MCF 10A (cell line): ENCODE measurements at regions of chr6 and their contacts with region 1.

Region 1: DNA sequence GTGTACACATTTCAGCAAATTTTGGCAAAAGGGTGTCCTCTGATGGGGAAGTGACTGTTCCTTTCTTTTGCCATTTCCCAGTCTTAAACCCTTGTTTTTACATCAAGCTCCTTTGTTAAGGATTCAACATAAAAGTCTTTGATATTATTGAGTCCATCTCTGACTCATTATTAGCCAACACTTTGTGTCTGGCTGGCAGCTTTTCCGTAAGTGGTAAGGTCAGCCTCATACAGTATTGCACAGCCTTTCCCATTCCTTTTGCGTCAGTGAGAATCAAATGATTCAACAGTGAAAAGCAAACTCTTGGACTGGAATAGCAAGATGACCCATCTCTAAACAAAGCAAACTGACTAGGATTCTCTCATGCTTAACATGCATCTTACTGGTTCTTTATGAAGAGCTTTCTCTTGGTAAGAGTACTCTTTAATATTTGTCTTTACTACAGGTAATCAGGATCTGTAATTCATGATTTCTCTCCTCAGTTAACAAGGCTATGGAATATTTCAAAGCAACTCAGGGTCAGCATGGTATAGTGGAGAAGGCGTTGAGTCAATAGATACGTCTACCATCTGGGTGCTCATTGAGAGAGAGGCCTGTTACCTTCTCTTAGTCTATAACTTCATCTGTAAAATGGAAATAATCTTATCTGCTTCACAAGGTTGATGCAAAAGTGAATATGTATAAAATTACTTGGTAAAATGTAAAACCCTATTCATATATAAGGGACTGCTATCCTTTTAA is 183.6 kb downstream of the PRL start:
- DNase-seq: peak; percentile 97
- H3K4me3 Mint-ChIP-seq: peak overlapping the region; percentile 33
- H3K27ac Mint-ChIP-seq: peak overlapping the region; percentile 69
- H3K4me1 Mint-ChIP-seq: peaks cover 16% of the 10 kb centered on the region
- H3K27me3 Mint-ChIP-seq: no peaks in the 10 kb centered on the region
- CTCF ChIP-seq: no peak

Region 2: DNA sequence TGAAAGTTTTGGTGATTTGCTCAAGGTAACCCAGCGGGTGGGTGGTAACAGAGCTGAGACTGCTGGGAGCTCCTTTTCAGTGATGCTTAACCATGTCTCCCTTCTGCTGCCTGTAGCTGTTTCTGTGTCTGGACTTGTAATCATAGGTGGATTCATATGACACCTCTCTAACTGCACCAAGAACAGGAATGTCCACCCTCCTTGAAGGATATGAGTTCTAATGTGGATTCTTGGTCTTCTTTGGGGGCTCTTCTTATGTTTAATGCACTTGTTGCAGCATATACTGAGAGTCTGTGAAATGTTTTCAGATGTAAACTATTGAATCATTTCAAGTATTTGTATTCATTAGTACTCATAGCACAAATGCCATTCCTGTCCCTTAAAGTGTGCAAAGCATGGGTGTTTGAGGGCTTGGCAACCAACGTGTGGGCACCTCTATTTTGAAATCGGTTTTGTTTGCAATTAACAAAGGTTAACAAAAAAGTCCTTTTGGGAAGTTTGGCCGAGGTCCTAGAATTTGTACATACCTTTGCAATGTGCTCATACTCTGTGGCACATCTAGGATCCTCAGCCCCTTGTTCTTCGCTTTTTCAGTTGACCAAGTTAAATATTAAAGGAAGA is 381.7 kb before region 1 on chr6:
- CTCF ChIA-PET with region 1: no interaction called
- POLR2A ChIA-PET with region 1: no interaction called
- intact Hi-C with region 1: no loop called
- DNase-seq: peak; percentile 92
- H3K4me3 Mint-ChIP-seq: peak overlapping the region; percentile 45
- H3K27ac Mint-ChIP-seq: peak overlapping the region; percentile 80
- H3K4me1 Mint-ChIP-seq: peaks cover 14% of the 10 kb centered on the region
- H3K27me3 Mint-ChIP-seq: no peaks in the 10 kb centered on the region
- CTCF ChIP-seq: no peak

Region 3: DNA sequence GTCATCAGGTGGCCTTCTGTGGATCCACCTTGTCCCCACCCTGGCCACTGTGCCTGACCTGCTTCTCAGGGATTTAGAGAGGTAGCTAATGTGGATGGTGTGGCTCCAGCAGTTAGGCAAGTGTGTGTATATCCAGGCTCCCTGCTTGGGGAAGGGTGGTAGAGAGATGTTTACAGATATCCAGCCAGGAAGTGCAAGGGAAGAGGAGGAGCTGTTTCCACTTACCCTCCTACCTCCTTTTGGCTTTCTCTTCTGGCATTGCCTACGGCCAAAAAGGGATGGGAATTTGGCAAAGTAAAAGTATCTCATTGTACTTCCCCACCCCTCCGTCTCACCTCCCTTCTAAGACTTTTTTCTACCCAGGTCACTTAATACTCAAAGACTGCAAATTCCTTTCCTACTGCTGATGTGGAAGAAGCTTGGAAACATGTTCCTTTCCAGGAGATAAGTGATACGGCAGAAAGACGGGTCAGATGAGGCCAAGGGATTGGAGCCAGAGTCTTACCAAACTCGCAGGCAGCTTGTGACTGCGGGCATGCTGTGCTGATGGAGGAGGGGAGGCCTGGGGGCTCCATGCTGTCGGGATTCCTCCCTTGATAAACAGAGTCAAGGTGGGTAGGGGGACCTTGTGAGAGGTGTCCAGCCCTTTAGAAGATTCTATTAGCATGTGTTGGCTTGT is 69.8 kb before region 1 on chr6:
- CTCF ChIA-PET with region 1: no interaction called
- POLR2A ChIA-PET with region 1: interaction called, 10 read pairs
- intact Hi-C with region 1: no loop called
- DNase-seq: peak; percentile 35
- H3K4me3 Mint-ChIP-seq: peak overlapping the region; percentile 73
- H3K27ac Mint-ChIP-seq: peak overlapping the region; percentile 88
- H3K4me1 Mint-ChIP-seq: peaks cover 10% of the 10 kb centered on the region
- H3K27me3 Mint-ChIP-seq: no peaks in the 10 kb centered on the region
- CTCF ChIP-seq: no peak

Region 4: GRCh38 chr6:22236626-22237414 is 123.6 kb after region 1 on chr6:
- CTCF ChIA-PET with region 1: no interaction called
- POLR2A ChIA-PET with region 1: interaction called, 4 read pairs
- intact Hi-C with region 1: loop called (anchors 1 kb)
- DNase-seq: peak; percentile 97
- H3K4me3 Mint-ChIP-seq: peak overlapping the region; percentile 66
- H3K27ac Mint-ChIP-seq: peak overlapping the region; percentile 94
- H3K4me1 Mint-ChIP-seq: peaks cover 28% of the 10 kb centered on the region
- H3K27me3 Mint-ChIP-seq: no peaks in the 10 kb centered on the region
- CTCF ChIP-seq: no peak